ENCODE measurements at regions of chr11 and their contacts with region 1.

Region 1: GRCh38 chr11:57480409-57481137 is 20.2 kb downstream of the RTN4RL2 start:
- DNase-seq: peak; percentile 82
- H3K4me3 ChIP-seq: peak overlapping the region in 1 of 2 experiments; percentile 26; a peak in 1 of 4 replicates
- H3K27ac ChIP-seq: no peak overlapping the region
- H3K4me1 ChIP-seq: peaks cover 4 to 17% of the 10 kb centered on the region in 2 experiments; a peak in 2 of 4 replicates
- H3K27me3 ChIP-seq: peaks cover 28% of the 10 kb centered on the region
- CTCF ChIP-seq: peak; percentile 61
- EP300 ChIP-seq: no peak
- RAD21 ChIP-seq: peak; percentile 52

Region 2: DNA sequence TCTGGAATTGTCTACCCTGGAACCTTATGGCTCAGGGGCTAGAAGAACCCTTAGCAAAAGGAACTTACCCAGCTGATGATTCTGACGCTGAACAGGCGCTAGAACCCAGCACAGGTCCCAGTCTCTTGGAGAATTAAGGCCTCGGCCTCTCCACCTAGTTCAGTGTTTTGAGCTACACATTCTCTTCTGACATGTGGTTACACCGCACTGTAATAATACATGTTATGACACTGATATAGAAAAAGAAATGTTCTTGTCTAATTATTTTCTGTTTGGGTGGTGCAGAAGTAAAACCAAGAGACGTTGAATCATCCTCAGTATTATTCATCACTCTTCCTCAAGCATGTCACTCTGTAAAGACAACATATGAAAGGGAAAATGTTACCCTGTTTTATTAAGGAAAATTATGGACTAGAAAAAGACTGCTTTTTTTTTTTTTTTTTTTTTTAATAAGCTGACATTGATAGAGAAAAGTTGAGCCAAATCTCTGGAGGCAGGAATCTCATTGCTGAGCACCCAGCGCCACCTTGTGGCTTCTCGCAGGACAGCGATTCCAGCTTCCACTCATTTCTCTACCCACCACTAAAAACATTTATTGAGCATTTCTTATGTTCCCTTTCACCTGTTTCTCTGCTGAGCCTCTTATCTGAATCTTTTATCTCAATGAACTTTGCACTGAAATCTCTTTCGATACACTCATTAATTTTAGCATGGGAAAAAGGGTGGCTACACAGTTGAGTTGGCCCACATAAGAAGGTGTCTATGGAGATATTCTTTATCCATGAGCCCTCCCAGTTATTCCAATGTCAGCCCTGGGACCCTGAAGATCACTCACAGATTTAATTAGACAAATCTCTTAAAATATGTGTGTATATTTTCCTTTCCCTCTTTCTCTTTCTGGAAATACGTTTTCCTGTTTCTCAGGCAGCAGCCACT is 230.9 kb before region 1 on chr11:
- CTCF ChIA-PET with region 1: no interaction called
- POLR2A ChIA-PET with region 1: no interaction called
- DNase-seq: no peak
- H3K4me3 ChIP-seq: peak overlapping the region in 1 of 2 experiments; percentile 21; a peak in 1 of 4 replicates
- H3K27ac ChIP-seq: peak overlapping the region in 1 of 2 experiments; percentile 94; a peak in 2 of 4 replicates
- H3K4me1 ChIP-seq: peaks cover 0 to 15% of the 10 kb centered on the region in 2 experiments; a peak in 1 of 4 replicates
- H3K27me3 ChIP-seq: no peaks in the 10 kb centered on the region; the same call in 1 of the 2 replicates
- CTCF ChIP-seq: peak; percentile 89
- EP300 ChIP-seq: no peak
- RAD21 ChIP-seq: peak; percentile 96

Region 3: GRCh38 chr11:57277845-57278709 is 202.5 kb before region 1 on chr11:
- CTCF ChIA-PET with region 1: no interaction called
- POLR2A ChIA-PET with region 1: no interaction called
- DNase-seq: peak; percentile 73
- H3K4me3 ChIP-seq: peak overlapping the region in 1 of 2 experiments; percentile 39; a peak in 1 of 4 replicates
- H3K27ac ChIP-seq: peak overlapping the region in 1 of 2 experiments; percentile 32; a peak in 3 of 4 replicates
- H3K4me1 ChIP-seq: peaks cover 4 to 5% of the 10 kb centered on the region in 2 experiments; a peak in 1 of 4 replicates
- H3K27me3 ChIP-seq: no peaks in the 10 kb centered on the region
- CTCF ChIP-seq: peak; percentile 90
- EP300 ChIP-seq: no peak
- RAD21 ChIP-seq: peak; percentile 73

Region 4: DNA sequence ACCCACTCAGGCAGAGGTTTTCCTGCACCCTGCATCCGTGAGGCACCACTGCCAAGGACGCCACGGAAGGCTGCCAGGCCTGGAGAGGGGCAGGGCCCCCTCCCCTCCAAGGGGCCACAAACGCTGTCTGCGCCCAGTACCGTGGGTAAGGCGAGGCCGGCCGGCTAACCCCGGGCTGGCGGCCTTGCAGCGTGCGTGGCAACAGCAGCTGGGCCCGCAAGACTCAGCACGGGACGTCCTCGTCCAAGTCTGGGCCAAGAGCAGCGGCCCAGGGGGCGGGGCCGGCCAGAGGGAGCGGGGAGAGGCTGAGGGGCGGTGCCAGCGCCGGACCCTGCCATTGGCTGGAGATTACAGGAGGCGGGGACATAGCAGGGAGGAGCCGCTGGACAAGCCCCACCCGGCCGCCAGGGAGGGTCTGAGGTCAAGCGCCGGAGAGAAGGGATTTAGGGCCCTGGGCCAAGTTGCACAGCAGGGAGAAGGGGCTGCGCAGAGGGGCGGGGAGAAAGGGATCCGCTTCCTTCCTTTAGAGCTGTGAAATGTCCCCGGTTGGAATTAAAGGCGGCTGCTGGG is 18.9 kb after region 1 on chr11:
- CTCF ChIA-PET with region 1: interaction called, 97 read pairs
- POLR2A ChIA-PET with region 1: no interaction called
- DNase-seq: peak; percentile 100
- H3K4me3 ChIP-seq: peak overlapping the region; percentile 30 to 36; a peak in 3 of 4 replicates
- H3K27ac ChIP-seq: peak overlapping the region in 1 of 2 experiments; percentile 51; a peak in 1 of 4 replicates
- H3K4me1 ChIP-seq: peaks cover 11 to 12% of the 10 kb centered on the region in 2 experiments; a peak in 2 of 4 replicates
- H3K27me3 ChIP-seq: no peaks in the 10 kb centered on the region
- CTCF ChIP-seq: no peak
- EP300 ChIP-seq: no peak
- RAD21 ChIP-seq: no peak